ENCODE measurements at regions of chr2 and their contacts with region 1.

Region 1: DNA sequence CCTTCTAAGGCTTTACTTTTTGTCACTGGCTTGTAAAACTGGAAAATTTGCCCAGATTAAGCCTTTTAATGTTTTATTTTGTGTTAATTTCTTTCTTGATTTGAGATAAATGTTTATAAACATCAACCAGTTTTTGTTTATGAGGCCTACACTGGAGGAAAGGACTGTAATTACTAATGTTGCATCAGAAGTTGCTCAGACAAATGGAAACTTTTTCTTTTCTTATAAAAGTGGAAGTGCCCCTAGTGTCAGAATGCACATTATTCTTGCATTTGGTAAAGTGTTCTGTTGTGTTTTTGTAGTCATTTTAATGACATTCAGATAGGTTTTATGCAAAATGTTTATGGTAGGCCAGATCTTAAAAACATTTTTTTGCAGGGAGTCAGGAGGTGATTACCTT is 25.3 kb downstream of the LCLAT1 start:
- DNase-seq: peak in 1 of 4 donors; percentile 32
- ATAC-seq: no peak
- H3K4me3 ChIP-seq: no peak overlapping the region
- H3K27ac ChIP-seq: peak overlapping the region in 1 of 2 donors; percentile 33
- H3K4me1 ChIP-seq: peaks cover 3 to 8% of the 10 kb centered on the region in 2 donors
- H3K27me3 ChIP-seq: no peaks in the 10 kb centered on the region
- CTCF ChIP-seq: no peak

Region 2: GRCh38 chr2:30231212-30231995 is 240.9 kb before region 1 on chr2 and contains the start of gene LBH:
- intact Hi-C with region 1: loop called in 1 of 2 experiments (anchors 10 kb)
- DNase-seq: peak; percentile 84 to 96 (median 90)
- ATAC-seq: peak; percentile 77
- H3K4me3 ChIP-seq: peak within 1 kb of the TSS; percentile 68 to 92
- H3K27ac ChIP-seq: peak within 1 kb of the TSS; percentile 77 to 92
- H3K4me1 ChIP-seq: peaks cover 16 to 48% of the 10 kb centered on the region in 2 donors
- H3K27me3 ChIP-seq: peaks cover 0 to 53% of the 10 kb centered on the region in 2 donors
- CTCF ChIP-seq: no peak
- polyA plus RNA-seq, gene LBH: 93.6 to 185 (median 118) TPM